Common myeloid progenitor, CD34-positive (primary cell): ENCODE measurements at regions of chr1 and their contacts with region 1.

Region 1: GRCh38 chr1:209827384-209828262 is at the start of gene UTP25:
- DNase-seq: peak; percentile 98 to 99 (median 99)
- H3K4me3 ChIP-seq: peak within 1 kb of the TSS; percentile 75 to 91 (median 85)
- H3K27ac ChIP-seq: peak within 1 kb of the TSS in 1 of 2 experiments; percentile 70
- H3K4me1 ChIP-seq: peaks cover 0 to 15% (median 7%) of the 10 kb centered on the region in 4 experiments
- H3K27me3 ChIP-seq: no peaks in the 10 kb centered on the region

Region 2: GRCh38 chr1:209805875-209806760 is 21.5 kb before region 1 on chr1 and contains the start of gene IRF6:
- CTCF ChIA-PET with region 1: interaction called, 106 read pairs
- POLR2A ChIA-PET with region 1: no interaction called
- DNase-seq: peak; percentile 54 to 73 (median 65)
- H3K4me3 ChIP-seq: peak within 1 kb of the TSS; percentile 15 to 73 (median 52)
- H3K27ac ChIP-seq: peak within 1 kb of the TSS in 1 of 2 experiments; percentile 2
- H3K4me1 ChIP-seq: peaks cover 0 to 12% (median 5%) of the 10 kb centered on the region in 4 experiments
- H3K27me3 ChIP-seq: peaks cover 0 to 14% (median 0%) of the 10 kb centered on the region in 5 experiments

Region 3: DNA sequence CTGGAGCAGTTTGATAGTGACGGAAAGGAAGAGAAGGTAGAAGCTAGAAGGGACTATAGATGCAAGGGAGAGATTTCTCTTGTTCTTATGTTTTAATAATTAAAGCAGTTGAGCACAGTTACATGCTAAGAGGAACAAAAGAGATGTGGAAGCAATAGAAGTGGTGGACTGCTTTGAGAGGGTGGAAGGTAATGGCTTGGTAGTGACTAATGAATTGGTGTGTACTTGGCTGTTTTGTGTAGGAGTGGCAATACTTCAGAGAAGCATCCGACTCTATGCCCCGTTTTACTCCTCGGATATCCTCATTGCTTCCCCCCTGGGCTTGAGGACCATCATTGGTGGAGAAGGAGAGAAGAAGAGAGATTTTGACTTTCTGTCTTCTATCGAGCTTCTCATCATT is 13.0 kb after region 1 on chr1:
- CTCF ChIA-PET with region 1: no interaction called
- POLR2A ChIA-PET with region 1: no interaction called
- DNase-seq: no peak
- H3K4me3 ChIP-seq: no peak overlapping the region
- H3K27ac ChIP-seq: no peak overlapping the region
- H3K4me1 ChIP-seq: no peaks in the 10 kb centered on the region
- H3K27me3 ChIP-seq: no peaks in the 10 kb centered on the region

Region 4: DNA sequence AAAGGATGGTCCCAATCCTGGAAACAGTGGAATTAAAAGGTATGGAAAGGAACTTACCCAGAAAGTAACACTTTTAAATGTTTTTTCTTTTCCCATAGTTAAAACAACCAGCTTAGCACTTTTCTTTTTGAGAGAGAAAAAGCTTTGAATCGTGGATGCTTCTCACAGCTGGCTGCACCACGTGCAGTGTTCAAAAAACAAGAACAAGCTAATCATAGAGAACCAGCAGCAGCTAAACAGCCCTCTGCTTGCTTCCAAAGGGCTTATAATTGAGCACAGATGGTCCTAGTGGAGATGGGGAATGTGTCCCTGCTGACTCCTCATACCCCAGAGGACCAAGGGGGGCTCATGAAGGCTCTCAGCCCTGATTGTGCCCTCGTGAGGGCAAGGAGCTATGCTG is 26.6 kb after region 1 on chr1:
- CTCF ChIA-PET with region 1: no interaction called
- POLR2A ChIA-PET with region 1: no interaction called
- DNase-seq: no peak
- H3K4me3 ChIP-seq: no peak overlapping the region
- H3K27ac ChIP-seq: no peak overlapping the region
- H3K4me1 ChIP-seq: peaks cover 0 to 8% (median 3%) of the 10 kb centered on the region in 4 experiments
- H3K27me3 ChIP-seq: no peaks in the 10 kb centered on the region

Region 5: GRCh38 chr1:209895709-209896108 is 68.1 kb after region 1 on chr1:
- CTCF ChIA-PET with region 1: no interaction called
- POLR2A ChIA-PET with region 1: no interaction called
- DNase-seq: no peak
- H3K4me3 ChIP-seq: no peak overlapping the region
- H3K27ac ChIP-seq: no peak overlapping the region
- H3K4me1 ChIP-seq: no peaks in the 10 kb centered on the region
- H3K27me3 ChIP-seq: peaks cover 0 to 16% (median 0%) of the 10 kb centered on the region in 5 experiments